Activated CD8-positive, alpha-beta memory T cell treated with anti-CD3 and anti-CD28 coated beads, Interleukin-2, amount 10 ng/mL, durations not matched to agents 7 days and 5 days (primary cell): ENCODE measurements at regions of chr11 and their contacts with region 1.

Region 1: DNA sequence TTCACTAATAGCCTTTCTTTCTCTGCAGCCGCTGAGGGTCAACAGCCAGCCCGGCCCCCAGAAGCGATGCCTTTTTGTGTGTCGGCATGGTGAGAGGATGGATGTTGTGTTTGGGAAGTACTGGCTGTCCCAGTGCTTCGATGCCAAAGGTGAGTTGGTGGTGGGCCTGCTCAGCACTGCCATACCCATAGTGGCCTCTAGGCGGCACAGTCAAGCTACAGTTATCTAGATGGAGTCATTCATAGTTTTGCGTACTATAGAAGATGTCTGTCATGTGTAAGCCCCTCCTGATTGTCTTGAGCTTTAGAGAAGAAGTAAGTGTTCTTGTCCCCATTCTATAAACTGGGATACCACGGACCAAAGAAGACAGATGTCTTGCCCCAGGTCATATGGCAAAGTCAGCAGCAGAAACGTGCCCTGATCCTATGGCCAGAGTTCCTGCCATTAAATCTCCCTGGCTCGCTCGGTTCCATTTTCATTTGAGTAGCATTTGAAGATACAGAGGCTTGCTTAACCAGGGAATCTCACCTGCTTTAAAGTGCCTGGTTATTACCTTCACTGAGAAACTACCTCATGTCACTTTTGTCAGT is 42.1 kb upstream of the CRTAM start:
- DNase-seq: peak; percentile 77
- ATAC-seq: peak; percentile 86
- H3K4me3 Mint-ChIP-seq: no peak overlapping the region
- H3K27ac Mint-ChIP-seq: no peak overlapping the region
- H3K4me1 Mint-ChIP-seq: no peaks in the 10 kb centered on the region
- H3K27me3 Mint-ChIP-seq: no peaks in the 10 kb centered on the region

Region 2: DNA sequence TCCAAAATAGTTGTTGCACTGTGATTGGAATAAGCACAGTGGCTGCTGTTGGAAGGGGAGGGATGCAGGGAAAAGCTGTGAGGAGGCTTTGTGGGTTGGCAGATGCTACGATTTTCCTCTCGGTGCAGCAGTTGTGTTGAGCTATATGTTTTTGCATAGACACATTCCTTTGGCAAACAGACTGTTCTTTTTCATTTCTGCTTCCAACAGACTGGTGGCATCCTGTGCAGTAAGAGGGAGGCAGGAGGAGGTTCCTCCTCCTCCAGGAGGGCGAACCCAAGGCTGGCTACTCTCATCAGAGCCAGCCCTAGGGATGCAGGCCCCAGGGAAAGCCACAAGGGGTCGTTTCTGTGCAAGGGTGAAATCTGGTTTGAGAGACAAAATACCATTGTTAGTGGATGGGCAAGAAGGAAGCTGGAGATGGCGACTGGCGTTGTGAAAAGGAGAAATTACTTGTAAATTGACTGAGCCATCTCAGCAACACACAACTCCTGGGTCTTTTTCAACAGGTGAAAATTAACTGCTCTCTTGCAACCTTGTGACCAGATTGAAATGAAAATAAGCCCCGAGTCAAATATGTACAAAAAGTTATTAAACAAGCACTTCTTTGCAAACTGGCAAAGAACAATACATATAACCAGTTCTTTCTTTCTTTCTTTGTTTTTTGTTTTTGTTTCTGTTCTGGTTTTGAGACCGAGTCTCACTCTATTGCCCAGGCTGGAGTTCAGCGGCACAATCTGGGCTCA is 167.2 kb before region 1 on chr11:
- CTCF ChIA-PET with region 1: interaction called, 12 read pairs
- DNase-seq: peak; percentile 81
- ATAC-seq: peak; percentile 88
- H3K4me3 Mint-ChIP-seq: no peak overlapping the region
- H3K27ac Mint-ChIP-seq: no peak overlapping the region
- H3K4me1 Mint-ChIP-seq: peaks cover 15% of the 10 kb centered on the region
- H3K27me3 Mint-ChIP-seq: peaks cover 7% of the 10 kb centered on the region

Region 3: GRCh38 chr11:122681735-122682134 is 114.5 kb before region 1 on chr11:
- CTCF ChIA-PET with region 1: no interaction called
- DNase-seq: no peak
- ATAC-seq: no peak
- H3K4me3 Mint-ChIP-seq: no peak overlapping the region
- H3K27ac Mint-ChIP-seq: no peak overlapping the region
- H3K4me1 Mint-ChIP-seq: peaks cover 17% of the 10 kb centered on the region
- H3K27me3 Mint-ChIP-seq: no peaks in the 10 kb centered on the region

Region 4: GRCh38 chr11:122808478-122808869 is 12.3 kb after region 1 on chr11:
- CTCF ChIA-PET with region 1: interaction called, 26 read pairs
- DNase-seq: no peak
- ATAC-seq: no peak
- H3K4me3 Mint-ChIP-seq: no peak overlapping the region
- H3K27ac Mint-ChIP-seq: peak overlapping the region; percentile 65
- H3K4me1 Mint-ChIP-seq: peaks cover 38% of the 10 kb centered on the region
- H3K27me3 Mint-ChIP-seq: no peaks in the 10 kb centered on the region

Region 5: GRCh38 chr11:122843281-122844141 is 47.3 kb after region 1 on chr11:
- CTCF ChIA-PET with region 1: interaction called, 15 read pairs
- DNase-seq: peak; percentile 88
- ATAC-seq: peak; percentile 77
- H3K4me3 Mint-ChIP-seq: peak overlapping the region; percentile 62
- H3K27ac Mint-ChIP-seq: peak overlapping the region; percentile 97
- H3K4me1 Mint-ChIP-seq: peaks cover 79% of the 10 kb centered on the region
- H3K27me3 Mint-ChIP-seq: no peaks in the 10 kb centered on the region

Region 6: DNA sequence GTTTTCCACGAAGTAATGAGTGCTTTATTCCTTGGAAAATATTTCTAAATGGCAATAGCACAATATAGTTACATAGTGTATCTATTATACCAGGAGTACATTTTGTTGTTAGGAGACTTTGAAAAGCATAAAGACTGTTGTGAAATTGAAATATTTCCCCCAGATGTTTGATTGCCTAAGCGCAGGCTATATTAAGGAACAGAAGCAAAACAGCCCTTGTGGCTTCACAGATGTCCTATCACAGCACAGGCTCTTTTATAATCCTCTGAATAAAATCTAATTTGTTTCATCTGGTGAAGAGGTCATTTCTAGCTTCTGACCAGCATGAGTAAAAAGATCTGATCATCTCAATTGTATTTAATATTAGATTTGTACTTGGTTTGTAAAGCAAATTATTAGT is 137.2 kb after region 1 on chr11:
- CTCF ChIA-PET with region 1: no interaction called
- DNase-seq: no peak
- ATAC-seq: no peak
- H3K4me3 Mint-ChIP-seq: no peak overlapping the region
- H3K27ac Mint-ChIP-seq: no peak overlapping the region
- H3K4me1 Mint-ChIP-seq: peaks cover 5% of the 10 kb centered on the region
- H3K27me3 Mint-ChIP-seq: no peaks in the 10 kb centered on the region